ENCODE measurements at regions of chr2 and their contacts with region 1.

Region 1: DNA sequence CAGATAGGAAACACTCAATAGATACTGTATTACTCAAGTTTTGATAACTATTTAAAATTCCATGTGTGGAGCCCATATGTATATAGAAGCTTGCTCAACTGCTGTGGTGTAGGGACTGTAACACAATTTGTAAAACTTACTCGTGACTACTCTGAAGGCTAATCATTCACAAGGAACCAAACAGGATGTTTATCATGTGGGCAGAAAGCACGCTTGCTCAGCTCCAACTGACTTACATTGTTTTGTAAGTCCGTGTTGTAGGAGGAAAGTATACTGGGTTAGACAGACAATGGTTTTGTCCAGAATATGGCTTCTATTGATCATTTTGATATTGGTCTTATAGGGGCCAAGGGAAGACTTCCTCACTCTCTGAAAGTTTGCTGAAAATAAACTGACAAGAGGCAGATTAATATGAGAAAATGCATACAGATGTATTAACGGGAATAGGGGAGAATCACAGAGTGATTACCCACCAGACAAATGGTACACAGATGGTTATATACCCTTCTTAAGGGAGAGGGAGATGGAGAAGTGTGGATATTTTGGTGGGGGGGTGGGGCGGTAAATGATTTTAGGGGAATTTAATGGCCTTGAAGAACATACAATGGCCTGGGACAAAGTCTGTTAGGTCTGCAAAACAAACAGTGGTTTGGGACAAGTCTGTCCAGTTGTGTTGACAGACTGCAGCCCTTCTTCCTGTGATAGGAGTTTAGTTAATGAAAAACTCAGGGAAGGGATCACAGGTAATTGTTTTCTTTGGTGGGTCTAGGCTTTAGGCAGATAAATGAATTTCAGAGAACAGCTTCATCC is 259.3 kb upstream of the SP5 start:
- DNase-seq: peak; percentile 74 to 77
- H3K4me3 ChIP-seq: no peak overlapping the region
- H3K4me3 Mint-ChIP-seq: peak overlapping the region; percentile 57
- H3K27ac Mint-ChIP-seq: peak overlapping the region; percentile 49
- H3K4me1 ChIP-seq: peaks cover 36% of the 10 kb centered on the region
- H3K4me1 Mint-ChIP-seq: peaks cover 43% of the 10 kb centered on the region
- H3K27me3 ChIP-seq: no peaks in the 10 kb centered on the region
- H3K27me3 Mint-ChIP-seq: no peaks in the 10 kb centered on the region
- CTCF ChIP-seq: no peak

Region 2: GRCh38 chr2:170396799-170397459 is 58.9 kb before region 1 on chr2:
- CTCF ChIA-PET with region 1: interaction called, 8 read pairs
- POLR2A ChIA-PET with region 1: no interaction called
- intact Hi-C with region 1: loop called (anchors 2 kb)
- DNase-seq: peak in 1 of 2 experiments; percentile 15
- H3K4me3 ChIP-seq: no peak overlapping the region
- H3K4me3 Mint-ChIP-seq: no peak overlapping the region
- H3K27ac Mint-ChIP-seq: no peak overlapping the region
- H3K4me1 ChIP-seq: peaks cover 12% of the 10 kb centered on the region; the same call in 1 of the 2 replicates
- H3K4me1 Mint-ChIP-seq: peaks cover 8% of the 10 kb centered on the region
- H3K27me3 ChIP-seq: no peaks in the 10 kb centered on the region
- H3K27me3 Mint-ChIP-seq: no peaks in the 10 kb centered on the region
- CTCF ChIP-seq: peak; percentile 5 to 60

Region 3: DNA sequence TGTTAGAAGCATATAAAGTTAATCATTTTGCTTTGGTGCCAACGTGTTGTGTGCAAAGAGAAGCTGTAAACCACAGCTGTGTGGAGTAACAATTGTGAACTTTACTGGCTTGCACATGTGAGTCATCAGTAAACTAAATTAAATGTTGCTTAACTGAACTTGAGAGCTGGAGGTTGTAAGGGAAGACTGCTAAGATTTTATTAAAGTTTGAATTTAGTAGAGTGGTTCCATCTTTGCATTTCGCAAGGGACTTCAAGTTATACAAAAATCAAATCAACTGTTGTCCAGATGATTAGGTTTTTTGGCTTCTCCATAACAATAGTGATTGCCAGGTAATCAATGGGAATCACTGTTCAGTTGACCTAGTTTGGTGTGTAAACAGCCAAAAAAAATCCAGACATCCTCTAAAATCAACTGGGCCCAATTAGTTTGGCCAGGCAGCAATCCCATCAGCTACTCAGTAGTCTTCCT is 30.5 kb before region 1 on chr2:
- CTCF ChIA-PET with region 1: no interaction called
- POLR2A ChIA-PET with region 1: no interaction called
- intact Hi-C with region 1: no loop called
- DNase-seq: no peak
- H3K4me3 ChIP-seq: no peak overlapping the region
- H3K4me3 Mint-ChIP-seq: no peak overlapping the region
- H3K27ac Mint-ChIP-seq: no peak overlapping the region
- H3K4me1 ChIP-seq: 0 out of 2 replicates have a peak, but pooled peaks cover 6% of the 10 kb centered on the region
- H3K4me1 Mint-ChIP-seq: no peaks in the 10 kb centered on the region
- H3K27me3 ChIP-seq: no peaks in the 10 kb centered on the region
- H3K27me3 Mint-ChIP-seq: no peaks in the 10 kb centered on the region
- CTCF ChIP-seq: no peak

Region 4: GRCh38 chr2:170475878-170476277 is 20.1 kb after region 1 on chr2:
- CTCF ChIA-PET with region 1: no interaction called
- POLR2A ChIA-PET with region 1: no interaction called
- intact Hi-C with region 1: loop called (anchors 2 kb)
- DNase-seq: peak; percentile 66 to 78
- H3K4me3 ChIP-seq: no peak overlapping the region
- H3K4me3 Mint-ChIP-seq: no peak overlapping the region
- H3K27ac Mint-ChIP-seq: peak overlapping the region; percentile 21
- H3K4me1 ChIP-seq: peaks cover 15% of the 10 kb centered on the region
- H3K4me1 Mint-ChIP-seq: peaks cover 24% of the 10 kb centered on the region
- H3K27me3 ChIP-seq: no peaks in the 10 kb centered on the region
- H3K27me3 Mint-ChIP-seq: no peaks in the 10 kb centered on the region
- CTCF ChIP-seq: no peak

Region 5: GRCh38 chr2:170770606-170771420 is 315.0 kb after region 1 on chr2:
- CTCF ChIA-PET with region 1: interaction called, 3 read pairs
- POLR2A ChIA-PET with region 1: no interaction called
- intact Hi-C with region 1: loop called (anchors 5 kb)
- DNase-seq: peak; percentile 93
- H3K4me3 ChIP-seq: peak overlapping the region; percentile 80
- H3K4me3 Mint-ChIP-seq: peak overlapping the region; percentile 93
- H3K27ac Mint-ChIP-seq: peak overlapping the region; percentile 97
- H3K4me1 ChIP-seq: peaks cover 37% of the 10 kb centered on the region
- H3K4me1 Mint-ChIP-seq: peaks cover 19% of the 10 kb centered on the region
- H3K27me3 ChIP-seq: no peaks in the 10 kb centered on the region
- H3K27me3 Mint-ChIP-seq: no peaks in the 10 kb centered on the region
- CTCF ChIP-seq: no peak